HEK293T (cell line): ENCODE measurements at regions of chr6 and their contacts with region 1.

Region 1: DNA sequence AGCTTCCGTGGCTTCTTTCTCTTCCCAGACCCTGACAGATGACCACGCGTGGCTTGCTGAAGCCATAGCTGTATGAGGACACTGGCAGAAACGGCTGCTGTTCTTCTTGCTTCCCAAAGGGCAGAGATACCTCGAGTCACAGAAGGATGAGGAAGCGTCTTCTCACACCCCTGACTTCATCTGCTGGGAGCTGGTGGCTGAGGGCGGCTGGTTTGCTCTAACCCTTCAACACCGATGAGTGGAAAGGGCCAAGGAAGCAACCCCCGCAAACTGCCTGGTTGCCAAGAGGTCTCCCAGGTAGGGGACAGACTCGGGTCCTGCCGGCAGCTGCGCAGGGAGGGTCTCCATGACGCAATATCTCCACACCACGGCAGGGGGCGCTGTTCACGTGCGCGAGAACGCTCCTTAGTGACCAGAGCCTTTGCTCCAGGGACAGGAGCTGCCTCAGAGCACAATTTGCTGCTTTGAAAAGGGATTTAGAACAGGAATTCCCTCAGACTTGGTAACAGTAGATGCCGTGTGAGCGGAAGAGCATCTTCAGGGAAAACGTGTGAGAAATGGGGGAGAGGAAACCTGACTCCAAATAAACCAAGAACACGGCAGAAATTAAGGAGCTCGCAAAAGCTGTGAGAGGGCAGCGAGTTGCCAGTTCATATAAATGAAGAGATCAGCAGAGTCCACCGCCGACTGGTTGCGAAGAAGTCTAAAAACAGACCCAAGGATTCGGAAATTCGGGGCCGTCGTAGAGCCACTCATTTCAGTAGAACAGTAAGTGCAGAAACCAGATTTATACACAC is 80.2 kb downstream of the ERMARD start:
- DNase-seq: peak; percentile 92

Region 2: DNA sequence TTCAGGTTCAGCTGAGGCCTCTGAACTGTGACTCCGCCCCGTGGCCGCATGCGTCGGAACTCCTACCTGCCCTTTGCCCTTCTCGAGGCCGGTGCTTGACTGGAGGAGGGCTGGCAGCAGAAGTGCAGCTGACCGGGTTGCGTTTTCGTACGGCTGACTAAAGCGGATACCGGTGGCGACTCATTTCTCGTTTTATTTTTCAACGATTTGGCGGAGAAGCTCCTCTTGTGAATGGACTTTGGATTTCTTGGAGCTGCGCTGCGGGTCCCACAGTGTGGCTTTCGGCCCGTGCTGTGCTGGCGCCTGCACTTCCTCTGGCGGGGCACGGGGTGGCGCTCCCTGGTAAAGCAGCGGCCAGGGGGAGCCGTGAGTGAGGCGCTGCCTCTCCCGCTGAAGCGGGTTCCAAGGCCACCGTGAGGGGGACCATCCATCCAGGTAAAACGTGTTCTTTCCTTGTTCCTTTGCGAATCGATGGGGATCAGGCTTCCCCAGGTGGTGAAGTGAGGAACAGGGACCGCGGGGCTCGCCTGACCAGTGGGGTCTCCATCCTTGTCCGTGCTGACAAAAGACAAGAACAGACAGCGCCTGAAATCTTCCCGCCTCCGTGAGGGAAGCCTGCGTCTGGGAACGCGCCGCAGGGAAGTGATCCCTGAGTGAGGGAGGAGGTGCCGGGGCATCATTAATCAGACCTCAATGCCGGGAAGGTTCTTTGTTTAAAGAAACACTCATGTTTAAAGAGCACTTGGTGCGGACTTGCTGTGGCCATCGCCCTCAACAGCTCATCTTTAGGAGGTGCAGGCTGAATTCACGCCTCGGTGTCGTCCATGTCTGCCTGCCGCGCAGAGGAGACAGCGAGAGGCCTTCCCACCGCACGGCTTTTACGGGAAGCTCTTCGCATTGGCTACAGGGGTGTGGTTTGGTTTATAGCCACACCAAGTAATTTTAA is 41.4 kb before region 1 on chr6:
- CTCF ChIA-PET with region 1: interaction called, 16 read pairs
- POLR2A ChIA-PET with region 1: no interaction called
- DNase-seq: peak; percentile 94

Region 3: DNA sequence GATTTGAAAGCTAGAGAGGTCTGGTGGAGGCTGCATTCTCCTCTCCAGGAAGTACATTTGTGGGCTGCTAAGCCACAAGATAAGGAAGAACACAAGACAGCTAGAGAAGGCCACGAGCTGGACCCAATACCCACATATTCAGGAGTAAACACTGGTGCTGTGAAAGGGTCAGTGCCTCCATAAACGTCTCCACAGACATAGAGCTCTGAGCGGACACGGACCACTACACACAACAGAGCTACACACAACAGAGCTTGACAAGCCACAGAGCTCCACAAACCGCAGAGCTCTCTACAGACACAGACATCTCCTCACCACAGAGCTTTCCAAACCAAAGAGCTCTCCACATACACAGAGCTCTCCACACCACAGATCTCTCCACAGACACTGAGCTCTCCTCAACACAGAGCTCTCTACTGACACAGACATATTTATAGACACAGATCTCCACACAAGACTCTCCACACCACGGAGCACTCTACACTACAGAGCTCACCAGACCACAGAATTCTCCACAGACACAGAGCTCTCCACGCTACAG is 28.3 kb before region 1 on chr6:
- CTCF ChIA-PET with region 1: interaction called, 31 read pairs
- POLR2A ChIA-PET with region 1: no interaction called
- DNase-seq: no peak

Region 4: GRCh38 chr6:169845426-169846285 is 14.0 kb after region 1 on chr6:
- CTCF ChIA-PET with region 1: interaction called, 11 read pairs
- POLR2A ChIA-PET with region 1: no interaction called
- DNase-seq: no peak

Region 5: GRCh38 chr6:169976301-169977081 is 144.8 kb after region 1 on chr6:
- CTCF ChIA-PET with region 1: no interaction called
- POLR2A ChIA-PET with region 1: no interaction called
- DNase-seq: no peak

Region 6: DNA sequence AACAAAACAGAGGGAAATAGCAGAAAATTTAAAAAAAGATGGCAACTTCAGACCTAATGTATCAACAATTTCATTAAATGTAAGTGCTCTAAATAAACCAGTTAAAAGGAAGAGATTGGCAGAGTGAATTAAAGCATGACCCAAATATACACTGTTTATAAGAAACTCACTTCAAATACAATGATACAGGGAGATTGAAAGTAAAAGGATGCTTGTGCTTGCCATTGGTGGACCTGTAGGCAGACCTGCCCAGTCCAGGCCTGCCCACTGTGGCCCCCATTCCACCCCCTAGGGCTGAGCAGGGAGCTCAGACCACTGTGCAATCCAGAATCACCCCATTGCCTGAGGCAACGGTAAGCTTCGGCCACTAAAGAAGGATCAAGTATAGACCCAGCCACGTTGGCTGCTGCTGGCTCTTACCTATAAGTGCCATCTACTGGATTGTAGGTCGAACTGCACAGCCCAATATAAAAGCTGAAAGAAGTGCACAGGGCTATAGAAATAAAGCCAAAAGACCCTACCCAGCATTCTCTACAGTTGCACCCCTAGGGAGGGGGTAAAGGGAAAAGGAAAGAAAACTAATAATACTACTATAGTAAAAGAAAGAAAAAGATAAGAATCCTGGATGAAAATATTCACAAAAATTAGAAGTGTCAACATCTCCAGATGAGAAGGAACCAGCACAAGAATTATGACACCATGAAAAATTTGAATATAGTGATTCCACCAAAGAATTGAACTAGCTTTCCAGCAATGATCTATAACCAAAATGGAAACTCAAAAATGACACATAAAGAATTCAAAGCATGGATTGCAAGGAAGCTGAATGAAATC is 685.4 kb after region 1 on chr6:
- CTCF ChIA-PET with region 1: interaction called, 10 read pairs
- POLR2A ChIA-PET with region 1: no interaction called
- DNase-seq: peak; percentile 62